ENCODE measurements at regions of chr14 and their contacts with region 1.

Region 1: GRCh38 chr14:36647824-36648753 is 13.6 kb upstream of the PAX9 start:
- DNase-seq: no peak
- H3K4me3 ChIP-seq: peak overlapping the region; percentile 54 to 60
- H3K27ac ChIP-seq: no peak overlapping the region
- H3K4me1 ChIP-seq: peaks cover 5 to 13% of the 10 kb centered on the region in 2 donors
- H3K27me3 ChIP-seq: no peaks in the 10 kb centered on the region
- CTCF ChIP-seq: peak; percentile 22 to 59 (median 31)

Region 2: DNA sequence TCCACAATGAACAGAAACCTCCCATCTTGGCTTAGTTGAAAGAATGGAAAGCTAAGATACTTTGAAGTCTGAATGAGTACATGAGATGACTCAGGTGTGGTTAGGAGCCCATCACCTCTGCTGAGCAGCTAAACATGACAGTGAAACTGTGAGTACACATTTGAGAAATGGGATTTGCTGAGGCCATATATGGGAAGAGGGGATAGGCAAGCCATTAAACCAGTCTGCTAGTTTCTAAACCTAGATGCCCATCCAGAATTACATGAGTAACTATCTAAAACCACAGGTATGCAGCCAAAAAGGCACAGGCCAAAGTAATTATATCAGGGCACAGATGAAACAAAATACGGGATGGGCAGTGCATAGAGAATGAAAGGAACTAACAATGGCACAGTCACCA is 169.3 kb before region 1 on chr14:
- intact Hi-C with region 1: no loop called
- DNase-seq: no peak
- H3K4me3 ChIP-seq: no peak overlapping the region
- H3K27ac ChIP-seq: no peak overlapping the region
- H3K4me1 ChIP-seq: no peaks in the 10 kb centered on the region
- H3K27me3 ChIP-seq: no peaks in the 10 kb centered on the region
- CTCF ChIP-seq: no peak

Region 3: GRCh38 chr14:37116933-37117849 is 469.1 kb after region 1 on chr14:
- intact Hi-C with region 1: loop called (anchors 10 kb)
- DNase-seq: no peak
- H3K4me3 ChIP-seq: no peak overlapping the region
- H3K27ac ChIP-seq: peak overlapping the region in 1 of 2 donors; percentile 7
- H3K4me1 ChIP-seq: peaks cover 0 to 6% of the 10 kb centered on the region in 2 donors
- H3K27me3 ChIP-seq: no peaks in the 10 kb centered on the region
- CTCF ChIP-seq: peak; percentile 14 to 65 (median 44)

Region 4: DNA sequence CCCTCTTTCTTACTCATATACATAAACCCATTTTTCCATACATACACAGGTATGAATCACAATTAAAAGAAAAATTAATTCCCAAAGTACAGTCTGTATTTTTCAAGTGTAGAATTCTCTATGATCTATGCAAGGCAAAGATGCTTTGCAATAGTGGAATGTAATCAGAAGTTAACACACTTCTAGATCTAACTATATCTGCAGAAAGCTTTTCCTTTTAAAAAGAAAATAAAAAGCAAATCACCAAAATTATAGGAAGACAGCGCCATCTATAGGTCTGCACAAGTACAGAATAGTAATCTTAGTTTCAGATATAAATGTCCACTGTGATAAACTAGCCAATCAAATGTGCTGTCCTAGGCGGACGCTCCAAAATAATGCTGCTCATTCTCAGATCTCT is 502.3 kb after region 1 on chr14:
- intact Hi-C with region 1: loop called (anchors 1 kb)
- DNase-seq: no peak
- H3K4me3 ChIP-seq: no peak overlapping the region
- H3K27ac ChIP-seq: no peak overlapping the region
- H3K4me1 ChIP-seq: no peaks in the 10 kb centered on the region
- H3K27me3 ChIP-seq: no peaks in the 10 kb centered on the region
- CTCF ChIP-seq: peak in 2 of 3 experiments; percentile 54 to 74